Left lung (tissue), 14 donors: ENCODE measurements at regions of chr3 and their contacts with region 1.

Region 1: DNA sequence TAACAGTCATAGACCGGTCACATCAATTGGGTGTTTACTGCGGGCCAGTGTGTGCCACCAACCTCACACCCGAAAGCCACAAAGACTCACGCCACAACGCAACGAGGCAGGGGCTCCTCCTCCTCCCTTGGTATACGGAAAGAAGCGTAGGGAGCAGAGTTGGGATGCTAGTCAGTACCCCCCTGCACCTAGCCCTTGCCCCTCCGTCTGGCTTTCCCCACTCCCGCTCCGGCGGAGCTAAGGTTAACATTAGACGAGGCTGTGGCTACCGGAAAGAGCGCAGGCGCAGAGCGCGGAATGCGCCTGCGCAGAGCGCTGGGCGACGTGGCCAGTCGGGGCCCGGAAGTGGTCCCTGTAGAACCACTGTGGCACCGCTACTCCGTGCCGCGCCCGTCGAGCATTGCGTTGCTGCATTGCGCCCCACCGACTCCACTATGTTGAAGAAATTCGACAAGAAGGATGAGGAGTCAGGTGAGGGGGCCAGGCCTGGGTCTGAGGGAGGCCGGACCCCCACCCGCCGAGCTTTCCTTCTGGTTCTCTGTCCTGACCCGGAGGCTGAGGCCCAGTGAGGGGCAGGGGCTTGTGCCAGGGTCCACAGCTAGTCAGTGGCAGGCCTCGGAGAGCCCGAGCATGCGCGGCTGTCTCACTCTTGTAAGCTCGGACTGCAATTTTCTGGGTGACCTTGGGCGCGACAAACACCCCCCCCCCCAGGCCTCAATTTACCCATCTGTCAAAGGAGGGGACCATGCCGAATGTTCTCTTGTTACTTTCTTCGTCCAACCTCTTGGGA is at the start of gene COPG1:
- DNase-seq: peak; percentile 85 to 97 (median 92)
- ATAC-seq: peak; percentile 89
- H3K4me3 ChIP-seq: peak within 1 kb of the TSS; percentile 89 to 99
- H3K27ac ChIP-seq: peak within 1 kb of the TSS; percentile 87 to 92
- H3K4me1 ChIP-seq: peaks cover 26 to 56% of the 10 kb centered on the region in 2 donors
- H3K27me3 ChIP-seq: no peaks in the 10 kb centered on the region
- CTCF ChIP-seq: no peak
- polyA plus RNA-seq, gene COPG1: 138 to 172 (median 159) TPM

Region 2: DNA sequence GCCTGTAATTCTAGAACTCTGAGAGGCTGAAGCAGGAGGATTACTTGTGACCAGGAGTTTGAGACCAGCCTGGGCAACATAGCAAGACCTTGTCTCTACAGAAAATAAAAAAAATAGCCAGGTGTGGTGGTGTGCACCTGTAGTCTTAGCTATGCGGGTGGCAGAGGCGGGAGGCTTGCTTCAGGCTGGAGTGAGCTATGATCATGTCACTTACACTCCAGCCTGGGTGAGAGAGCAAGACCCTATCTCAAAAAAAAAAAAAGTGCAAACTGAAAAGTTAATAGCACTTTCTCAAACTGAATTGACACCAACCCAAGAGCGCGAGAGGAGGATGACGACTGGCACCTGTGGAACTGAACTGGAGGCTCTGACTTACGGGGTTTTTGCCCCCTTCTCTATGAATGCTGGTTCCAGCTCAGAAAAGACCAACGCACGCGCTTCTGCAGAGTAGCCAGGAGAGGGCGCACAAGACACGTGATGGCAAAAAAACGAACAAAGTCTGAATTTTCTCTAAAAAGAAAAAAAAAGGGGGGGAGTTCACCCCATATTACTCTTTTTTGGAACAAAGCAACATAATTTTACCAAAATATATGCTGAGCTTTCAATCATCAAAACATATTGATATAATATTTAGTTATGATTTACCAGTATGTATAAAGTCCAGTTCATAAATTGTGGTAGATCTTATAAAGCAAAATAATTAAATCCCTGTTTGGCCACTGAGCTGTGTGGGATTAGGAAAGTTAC is 279.3 kb before region 1 on chr3:
- intact Hi-C with region 1: loop called in 1 of 2 experiments (anchors 5 kb)
- DNase-seq: peak in 3 of 4 donors; percentile 50 to 74 (median 55)
- ATAC-seq: no peak
- H3K4me3 ChIP-seq: no peak overlapping the region
- H3K27ac ChIP-seq: peak overlapping the region in 1 of 2 donors; percentile 2
- H3K4me1 ChIP-seq: peaks cover 0 to 24% of the 10 kb centered on the region in 2 donors
- H3K27me3 ChIP-seq: no peaks in the 10 kb centered on the region
- CTCF ChIP-seq: peak; percentile 82 to 93

Region 3: GRCh38 chr3:129058441-129059200 is 190.8 kb before region 1 on chr3:
- intact Hi-C with region 1: loop called in 1 of 2 experiments (anchors 10 kb)
- DNase-seq: peak in 1 of 4 donors; percentile 55
- ATAC-seq: peak; percentile 13
- H3K4me3 ChIP-seq: no peak overlapping the region
- H3K27ac ChIP-seq: no peak overlapping the region
- H3K4me1 ChIP-seq: no peaks in the 10 kb centered on the region
- H3K27me3 ChIP-seq: no peaks in the 10 kb centered on the region
- CTCF ChIP-seq: no peak